ENCODE measurements at regions of chr12 and their contacts with region 1.

Region 1: DNA sequence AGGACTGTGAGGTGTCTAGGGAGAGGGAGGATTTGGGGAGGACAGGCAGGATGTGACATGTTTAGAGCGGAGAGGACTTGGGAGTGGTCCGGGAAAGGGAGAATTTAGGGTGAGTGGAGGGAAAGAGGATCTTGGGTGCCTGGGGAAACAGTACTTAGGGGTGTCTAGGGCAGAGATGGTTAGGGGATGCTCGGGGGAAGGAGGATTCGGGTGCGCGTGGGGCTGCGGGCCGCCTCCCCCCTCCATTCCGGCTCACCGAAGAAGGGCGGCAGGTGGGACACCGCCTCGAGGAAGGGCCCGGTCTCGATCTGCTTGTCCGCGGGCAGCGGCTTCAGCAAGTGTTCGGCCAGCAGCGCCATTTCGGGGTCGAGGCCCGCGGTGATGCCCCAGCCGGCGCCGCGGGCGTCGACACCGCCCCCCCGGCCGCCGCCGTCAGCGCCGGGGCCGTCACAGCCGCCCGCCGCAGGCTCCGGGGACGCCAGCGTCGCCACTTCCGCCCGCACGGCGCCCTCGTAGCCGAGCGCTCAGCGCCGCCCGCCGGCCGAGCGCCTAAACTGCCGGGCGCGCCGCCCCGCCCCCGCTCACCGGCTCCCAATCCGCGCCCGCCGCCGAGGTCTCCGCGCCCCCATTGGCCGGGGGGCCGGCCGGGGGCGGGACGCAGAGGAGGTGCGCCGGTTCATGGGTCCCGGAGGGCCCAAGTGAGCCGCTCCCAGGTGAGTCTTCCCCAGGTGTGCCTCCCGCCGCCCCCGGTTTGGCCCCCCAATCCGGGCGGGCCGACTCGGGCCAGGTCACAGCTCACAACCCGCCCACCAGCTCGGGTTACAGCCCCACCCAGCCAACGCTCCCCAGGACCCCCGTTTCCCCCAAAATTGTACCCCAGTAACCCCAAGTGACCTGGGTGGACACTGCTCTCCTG is at the start of gene GLTP:
- DNase-seq: peak; percentile 94
- ATAC-seq: peak; percentile 98
- H3K4me3 Mint-ChIP-seq: peak within 1 kb of the TSS; percentile 90
- H3K27ac Mint-ChIP-seq: peak within 1 kb of the TSS; percentile 83
- H3K4me1 Mint-ChIP-seq: peaks cover 54% of the 10 kb centered on the region
- H3K27me3 Mint-ChIP-seq: no peaks in the 10 kb centered on the region
- CTCF ChIP-seq: no peak
- total RNA-seq, gene GLTP: 26.5 and 30.0 TPM in 2 replicates

Region 2: DNA sequence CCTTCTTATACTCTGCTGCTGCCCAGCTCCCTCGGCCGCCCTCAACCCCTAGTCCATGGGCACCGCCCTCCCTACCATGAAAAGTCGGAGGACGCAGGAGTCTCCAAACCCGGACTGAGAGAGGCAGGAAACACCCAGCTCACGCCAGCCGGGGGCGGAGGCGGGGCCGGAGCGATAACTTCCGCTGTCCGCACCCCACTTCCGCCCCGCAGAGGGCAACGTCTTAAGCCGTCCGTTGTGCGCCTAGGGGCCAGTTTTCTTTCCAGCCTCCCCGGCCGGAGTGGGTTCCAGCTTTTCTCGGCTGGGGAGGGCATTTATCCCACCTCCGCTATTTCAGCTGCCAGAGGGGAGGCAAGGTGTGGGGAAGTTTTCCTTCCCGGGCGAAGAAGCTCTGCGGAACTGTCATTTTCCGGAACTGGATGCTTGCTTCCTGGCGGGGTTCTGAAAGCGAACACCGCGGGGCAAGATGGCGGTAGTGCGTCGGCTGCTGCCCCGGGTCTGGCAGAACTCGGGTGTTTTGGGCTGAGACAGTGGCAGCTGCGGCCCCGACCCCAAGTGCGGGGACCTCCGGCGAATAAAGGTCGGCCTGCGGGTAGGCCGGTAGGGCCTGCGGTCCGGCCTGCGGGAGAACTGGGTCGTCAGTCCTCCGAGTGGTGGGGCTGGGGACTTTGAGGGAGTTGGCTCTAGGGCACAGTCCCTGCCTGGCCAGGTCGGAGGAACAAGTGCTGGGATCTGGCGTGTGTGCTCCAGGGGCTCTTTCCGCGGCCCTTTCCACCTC is 402.9 kb before region 1 on chr12 and contains the starts of genes KCTD10 and UBE3B:
- CTCF ChIA-PET with region 1: no interaction called
- POLR2A ChIA-PET with region 1: no interaction called
- intact Hi-C with region 1: loop called (anchors 1 kb)
- DNase-seq: peak; percentile 84
- ATAC-seq: peak; percentile 94
- H3K4me3 Mint-ChIP-seq: peak within 1 kb of the TSS; percentile 99
- H3K27ac Mint-ChIP-seq: peak within 1 kb of the TSS; percentile 98
- H3K4me1 Mint-ChIP-seq: peaks cover 38% of the 10 kb centered on the region
- H3K27me3 Mint-ChIP-seq: no peaks in the 10 kb centered on the region
- CTCF ChIP-seq: no peak
- total RNA-seq, gene KCTD10: 32.7 and 38.7 TPM in 2 replicates
- total RNA-seq, gene UBE3B: 35.4 and 36.9 TPM in 2 replicates

Region 3: DNA sequence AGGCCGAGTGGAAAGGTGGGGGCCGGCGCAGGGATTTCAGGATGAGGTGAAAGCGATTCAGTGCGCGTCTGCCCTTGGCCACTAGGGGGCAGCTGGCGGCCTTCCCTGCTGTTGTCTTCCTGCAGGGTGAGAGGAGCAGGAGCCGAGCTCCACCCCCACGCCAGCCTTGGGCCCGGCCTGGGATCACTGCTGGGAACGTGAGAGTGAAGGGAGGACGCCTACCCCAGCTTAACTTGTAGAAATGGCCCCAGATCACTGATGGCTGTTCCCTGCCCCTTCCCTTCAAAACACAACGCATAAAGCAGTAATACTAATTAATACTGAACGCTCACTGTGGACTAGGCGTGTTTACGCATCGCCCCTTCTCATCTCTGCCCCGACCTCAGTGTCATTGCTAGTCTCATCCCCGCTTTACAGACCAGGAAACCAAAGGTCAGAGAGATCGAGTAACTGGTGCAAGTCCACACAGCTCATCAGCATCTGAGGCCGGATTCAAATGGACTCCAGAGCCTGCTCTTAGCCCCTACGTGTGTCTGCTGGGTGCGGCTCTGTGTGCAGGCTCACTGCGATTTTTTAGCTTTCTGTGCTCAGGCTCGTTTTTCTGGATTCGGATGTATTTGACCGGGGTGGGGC is 282.4 kb before region 1 on chr12:
- CTCF ChIA-PET with region 1: no interaction called
- POLR2A ChIA-PET with region 1: no interaction called
- intact Hi-C with region 1: loop called (anchors 2 kb)
- DNase-seq: peak; percentile 48
- ATAC-seq: peak; percentile 65
- H3K4me3 Mint-ChIP-seq: no peak overlapping the region
- H3K27ac Mint-ChIP-seq: no peak overlapping the region
- H3K4me1 Mint-ChIP-seq: peaks cover 8% of the 10 kb centered on the region
- H3K27me3 Mint-ChIP-seq: no peaks in the 10 kb centered on the region
- CTCF ChIP-seq: peak; percentile 66

Region 4: GRCh38 chr12:109804820-109805761 is 75.2 kb before region 1 on chr12:
- CTCF ChIA-PET with region 1: interaction called, 5 read pairs
- POLR2A ChIA-PET with region 1: no interaction called
- intact Hi-C with region 1: loop called (anchors 1 kb)
- DNase-seq: peak; percentile 62
- ATAC-seq: peak; percentile 84
- H3K4me3 Mint-ChIP-seq: no peak overlapping the region
- H3K27ac Mint-ChIP-seq: no peak overlapping the region
- H3K4me1 Mint-ChIP-seq: peaks cover 2% of the 10 kb centered on the region
- H3K27me3 Mint-ChIP-seq: peaks cover 3% of the 10 kb centered on the region
- CTCF ChIP-seq: peak; percentile 88

Region 5: DNA sequence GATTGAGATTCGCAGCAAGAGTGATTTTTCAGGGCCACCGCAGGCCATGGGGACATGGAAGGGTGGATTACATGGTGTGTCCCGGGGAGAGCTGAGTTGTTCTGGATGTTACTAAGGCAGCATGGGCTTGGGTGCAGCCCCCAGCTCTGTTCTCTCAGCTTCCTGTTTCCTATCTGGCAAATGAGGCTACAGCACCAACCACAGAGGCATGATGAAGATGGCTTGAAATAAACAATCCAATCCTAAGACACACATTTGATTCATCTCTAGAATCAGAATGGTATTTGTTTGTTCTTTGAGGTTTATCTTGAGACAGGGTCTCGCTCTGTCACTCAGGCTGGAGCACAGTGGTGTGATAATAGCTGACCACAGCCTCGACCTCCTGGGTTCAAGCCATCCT is 21.5 kb before region 1 on chr12:
- CTCF ChIA-PET with region 1: no interaction called
- POLR2A ChIA-PET with region 1: no interaction called
- intact Hi-C with region 1: loop called (anchors 1 kb)
- DNase-seq: no peak
- ATAC-seq: no peak
- H3K4me3 Mint-ChIP-seq: no peak overlapping the region
- H3K27ac Mint-ChIP-seq: no peak overlapping the region
- H3K4me1 Mint-ChIP-seq: peaks cover 4% of the 10 kb centered on the region
- H3K27me3 Mint-ChIP-seq: no peaks in the 10 kb centered on the region
- CTCF ChIP-seq: no peak

Region 6: DNA sequence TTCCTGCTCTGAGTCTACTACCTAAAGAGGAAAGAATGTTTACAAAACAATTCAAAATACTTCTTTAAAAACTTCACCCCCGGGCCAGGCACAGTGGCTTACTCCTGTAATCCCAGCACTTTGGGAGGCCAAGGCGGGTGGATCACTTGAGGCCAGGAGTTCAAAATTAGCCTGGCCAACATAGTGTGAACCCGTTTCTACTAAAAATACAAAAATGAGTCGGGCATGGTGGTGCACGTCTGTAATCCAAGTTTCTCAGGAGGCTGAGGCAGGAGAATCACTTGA is 11.4 kb before region 1 on chr12:
- CTCF ChIA-PET with region 1: no interaction called
- POLR2A ChIA-PET with region 1: no interaction called
- intact Hi-C with region 1: no loop called
- DNase-seq: no peak
- ATAC-seq: no peak
- H3K4me3 Mint-ChIP-seq: no peak overlapping the region
- H3K27ac Mint-ChIP-seq: no peak overlapping the region
- H3K4me1 Mint-ChIP-seq: peaks cover 12% of the 10 kb centered on the region
- H3K27me3 Mint-ChIP-seq: no peaks in the 10 kb centered on the region
- CTCF ChIP-seq: no peak

Region 7: GRCh38 chr12:109995686-109996482 is 115.6 kb after region 1 on chr12 and contains the start of gene GIT2:
- CTCF ChIA-PET with region 1: no interaction called
- POLR2A ChIA-PET with region 1: no interaction called
- intact Hi-C with region 1: loop called (anchors 5 kb)
- DNase-seq: peak; percentile 86
- ATAC-seq: peak; percentile 72
- H3K4me3 Mint-ChIP-seq: peak within 1 kb of the TSS; percentile 96
- H3K27ac Mint-ChIP-seq: peak within 1 kb of the TSS; percentile 95
- H3K4me1 Mint-ChIP-seq: peaks cover 80% of the 10 kb centered on the region
- H3K27me3 Mint-ChIP-seq: no peaks in the 10 kb centered on the region
- CTCF ChIP-seq: no peak
- total RNA-seq, gene GIT2: 89.2 and 107 TPM in 2 replicates

Region 8: GRCh38 chr12:110073049-110073831 is 193.0 kb after region 1 on chr12:
- CTCF ChIA-PET with region 1: no interaction called
- POLR2A ChIA-PET with region 1: no interaction called
- intact Hi-C with region 1: no loop called
- DNase-seq: no peak
- ATAC-seq: peak; percentile 34
- H3K4me3 Mint-ChIP-seq: peak overlapping the region; percentile 82
- H3K27ac Mint-ChIP-seq: peak overlapping the region; percentile 41
- H3K4me1 Mint-ChIP-seq: peaks cover 15% of the 10 kb centered on the region
- H3K27me3 Mint-ChIP-seq: no peaks in the 10 kb centered on the region
- CTCF ChIP-seq: no peak

Measured in activated B cell treated with CpG ODN at 0.5 μM for 24 hours (primary cell).